ENCODE measurements at regions of chr9 and their contacts with region 1.

Region 1: GRCh38 chr9:37913480-37914153 is 9.7 kb upstream of the SLC25A51 start:
- DNase-seq: peak; percentile 81 to 90 (median 84)
- H3K4me3 ChIP-seq: no peak overlapping the region
- H3K27ac ChIP-seq: no peak overlapping the region
- H3K4me1 ChIP-seq: peaks cover 0 to 20% (median 3%) of the 10 kb centered on the region in 4 experiments
- H3K27me3 ChIP-seq: no peaks in the 10 kb centered on the region

Region 2: GRCh38 chr9:37925786-37926736 is 12.4 kb after region 1 on chr9:
- CTCF ChIA-PET with region 1: interaction called, 27 read pairs
- POLR2A ChIA-PET with region 1: no interaction called
- DNase-seq: no peak
- H3K4me3 ChIP-seq: no peak overlapping the region
- H3K27ac ChIP-seq: no peak overlapping the region
- H3K4me1 ChIP-seq: peaks cover 0 to 28% (median 12%) of the 10 kb centered on the region in 4 experiments
- H3K27me3 ChIP-seq: no peaks in the 10 kb centered on the region

Region 3: GRCh38 chr9:38068866-38069629 is 155.4 kb after region 1 on chr9 and contains the start of gene SHB:
- CTCF ChIA-PET with region 1: interaction called, 32 read pairs
- POLR2A ChIA-PET with region 1: no interaction called
- DNase-seq: peak; percentile 65 to 86 (median 79)
- H3K4me3 ChIP-seq: peak within 1 kb of the TSS; percentile 74 to 87 (median 77)
- H3K27ac ChIP-seq: peak within 1 kb of the TSS in 1 of 2 experiments; percentile 71
- H3K4me1 ChIP-seq: peaks cover 0 to 54% (median 39%) of the 10 kb centered on the region in 4 experiments
- H3K27me3 ChIP-seq: peaks cover 0 to 13% (median 3%) of the 10 kb centered on the region in 5 experiments

Region 4: DNA sequence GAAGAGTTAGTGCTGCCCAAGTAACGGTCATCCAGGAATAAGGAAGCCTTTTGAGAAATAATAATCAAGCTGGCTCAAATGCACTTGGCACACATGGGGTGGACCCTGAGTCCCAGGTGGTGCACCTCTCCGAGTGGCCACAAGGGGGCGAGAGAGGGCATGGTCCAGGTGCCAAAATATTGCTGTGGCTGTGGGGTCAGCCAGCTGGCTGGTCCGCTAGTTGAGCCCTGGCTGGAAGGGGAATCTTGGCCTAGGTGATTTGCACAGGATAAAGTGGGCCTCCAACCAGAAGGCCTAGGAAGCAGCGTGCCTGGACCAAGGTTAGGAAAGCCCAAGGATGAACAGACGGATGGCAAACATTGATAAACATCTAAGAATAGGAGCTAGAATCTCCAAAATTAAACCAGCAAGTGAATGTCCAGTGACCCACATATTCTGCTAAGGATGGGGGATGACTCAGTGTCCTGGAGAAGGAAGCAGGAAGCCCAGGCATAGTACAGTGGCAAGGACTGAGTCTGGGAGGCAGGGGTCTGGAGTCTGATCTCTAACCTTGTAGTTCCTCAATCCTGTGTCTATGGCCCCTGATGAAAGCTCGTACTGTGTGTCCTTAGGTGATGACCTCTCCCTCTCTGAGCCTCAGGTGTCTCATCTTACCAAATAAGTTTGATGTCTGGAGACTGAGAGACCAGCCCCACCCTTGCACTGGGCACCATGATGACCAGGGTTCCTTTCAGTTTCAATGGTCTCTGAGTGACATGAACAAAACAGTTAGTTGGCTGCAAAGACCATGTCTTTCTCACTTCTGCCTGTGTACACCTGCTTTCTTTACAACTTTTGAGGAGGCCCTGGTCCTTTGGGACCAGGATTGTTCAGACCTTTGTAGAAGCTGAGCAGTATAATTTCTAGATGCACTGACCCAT is 174.6 kb after region 1 on chr9:
- CTCF ChIA-PET with region 1: interaction called, 47 read pairs
- POLR2A ChIA-PET with region 1: no interaction called
- DNase-seq: peak; percentile 22 to 51 (median 37)
- H3K4me3 ChIP-seq: no peak overlapping the region
- H3K27ac ChIP-seq: no peak overlapping the region
- H3K4me1 ChIP-seq: peaks cover 0 to 12% (median 2%) of the 10 kb centered on the region in 4 experiments
- H3K27me3 ChIP-seq: no peaks in the 10 kb centered on the region

Region 5: GRCh38 chr9:38171926-38172325 is 258.3 kb after region 1 on chr9:
- CTCF ChIA-PET with region 1: no interaction called
- POLR2A ChIA-PET with region 1: no interaction called
- DNase-seq: no peak
- H3K4me3 ChIP-seq: no peak overlapping the region
- H3K27ac ChIP-seq: peak overlapping the region in 1 of 2 experiments; percentile 62
- H3K4me1 ChIP-seq: no peaks in the 10 kb centered on the region
- H3K27me3 ChIP-seq: no peaks in the 10 kb centered on the region

Region 6: GRCh38 chr9:38263532-38263931 is 349.9 kb after region 1 on chr9:
- CTCF ChIA-PET with region 1: interaction called, 31 read pairs
- POLR2A ChIA-PET with region 1: no interaction called
- DNase-seq: peak; percentile 24 to 51 (median 51)
- H3K4me3 ChIP-seq: no peak overlapping the region
- H3K27ac ChIP-seq: no peak overlapping the region
- H3K4me1 ChIP-seq: no peaks in the 10 kb centered on the region
- H3K27me3 ChIP-seq: no peaks in the 10 kb centered on the region

Region 7: GRCh38 chr9:38334234-38334633 is 420.6 kb after region 1 on chr9:
- CTCF ChIA-PET with region 1: interaction called, 17 read pairs
- POLR2A ChIA-PET with region 1: no interaction called
- DNase-seq: peak; percentile 6 to 14 (median 12)
- H3K4me3 ChIP-seq: no peak overlapping the region
- H3K27ac ChIP-seq: no peak overlapping the region
- H3K4me1 ChIP-seq: peaks cover 0 to 2% (median 0%) of the 10 kb centered on the region in 4 experiments
- H3K27me3 ChIP-seq: no peaks in the 10 kb centered on the region

Region 8: GRCh38 chr9:38361473-38361850 is 447.8 kb after region 1 on chr9:
- CTCF ChIA-PET with region 1: interaction called, 10 read pairs
- POLR2A ChIA-PET with region 1: no interaction called
- DNase-seq: no peak
- H3K4me3 ChIP-seq: no peak overlapping the region
- H3K27ac ChIP-seq: no peak overlapping the region
- H3K4me1 ChIP-seq: peaks cover 0 to 35% (median 17%) of the 10 kb centered on the region in 4 experiments
- H3K27me3 ChIP-seq: no peaks in the 10 kb centered on the region